Esophagus muscularis mucosa (tissue), 4 donors: ENCODE measurements at regions of chr3 and their contacts with region 1.

Region 1: DNA sequence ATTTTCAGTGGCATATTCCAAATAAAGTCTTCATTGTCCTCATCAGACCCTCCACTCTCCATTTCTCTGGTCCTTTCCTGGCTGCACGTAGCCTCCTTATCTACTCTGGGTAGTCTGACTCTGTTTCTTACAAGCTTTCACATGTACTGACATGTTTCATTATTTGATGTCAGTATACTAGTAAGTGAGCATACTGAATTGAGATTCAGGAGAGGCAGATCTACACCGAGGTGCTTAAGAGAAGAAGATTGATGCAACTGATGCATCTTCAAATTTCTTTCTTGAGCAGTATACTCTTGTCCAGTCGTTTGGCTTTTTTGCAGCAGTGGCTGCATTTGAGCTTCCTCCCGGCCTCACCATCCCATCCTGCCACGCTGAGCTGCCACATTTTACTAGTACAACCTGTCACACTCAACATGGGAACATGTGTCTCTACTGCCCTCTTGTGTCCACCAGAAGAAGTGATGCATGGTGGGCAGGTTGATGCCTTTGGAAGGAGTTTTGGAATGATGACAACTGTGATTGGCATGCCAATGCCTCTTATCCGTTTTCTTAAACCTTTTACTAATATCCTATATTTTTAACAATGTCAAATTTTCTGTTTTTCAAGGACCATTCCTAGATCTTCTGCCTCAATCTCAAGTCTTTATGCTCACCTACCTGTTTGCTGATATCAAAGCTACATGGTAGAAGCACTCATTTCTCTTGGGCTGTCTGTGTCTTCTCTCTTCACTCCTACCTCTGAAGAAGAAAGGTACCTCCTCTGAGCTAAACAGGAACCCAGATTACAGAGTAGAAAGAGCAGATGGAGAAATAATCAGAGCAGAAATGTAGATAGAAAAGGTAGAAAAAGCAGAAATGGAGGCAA is 38.7 kb downstream of the GUCA1C start:
- DNase-seq: no peak
- H3K4me3 ChIP-seq: no peak overlapping the region
- H3K27ac ChIP-seq: no peak overlapping the region
- H3K4me1 ChIP-seq: no peaks in the 10 kb centered on the region
- H3K27me3 ChIP-seq: peaks cover 0 to 3% (median 0%) of the 10 kb centered on the region in 4 donors
- CTCF ChIP-seq: peak; percentile 48 to 75 (median 61)
- EP300 ChIP-seq: no peak
- POLR2A ChIP-seq: no peak

Region 2: DNA sequence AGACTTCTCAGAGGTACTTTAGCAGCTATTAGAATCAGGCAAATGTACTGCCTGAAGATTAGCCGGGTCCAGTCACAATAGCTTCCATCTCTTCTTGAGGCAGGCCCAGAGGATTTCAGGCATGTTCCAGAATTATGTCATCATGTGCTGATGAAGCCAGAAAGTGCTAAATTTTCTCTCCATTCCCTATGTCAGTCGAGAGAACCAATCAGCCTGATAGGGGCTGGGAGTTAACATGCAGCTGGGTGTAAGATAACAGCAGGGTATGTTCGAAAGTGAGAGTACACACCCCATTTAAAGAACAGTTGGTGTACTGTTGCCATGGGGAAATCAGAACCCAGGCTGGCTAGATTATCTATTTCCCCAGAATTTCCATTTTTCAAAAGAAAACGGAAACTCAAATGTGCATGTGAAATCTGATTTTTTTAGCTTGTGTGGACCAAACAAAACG is 453.3 kb before region 1 on chr3:
- intact Hi-C with region 1: no loop called
- DNase-seq: no peak
- H3K4me3 ChIP-seq: no peak overlapping the region
- H3K27ac ChIP-seq: no peak overlapping the region
- H3K4me1 ChIP-seq: no peaks in the 10 kb centered on the region
- H3K27me3 ChIP-seq: no peaks in the 10 kb centered on the region
- CTCF ChIP-seq: no peak
- EP300 ChIP-seq: no peak
- POLR2A ChIP-seq: no peak

Region 3: GRCh38 chr3:108662130-108662738 is 252.8 kb before region 1 on chr3:
- intact Hi-C with region 1: loop called (anchors 2 kb)
- DNase-seq: no peak
- H3K4me3 ChIP-seq: no peak overlapping the region
- H3K27ac ChIP-seq: no peak overlapping the region
- H3K4me1 ChIP-seq: peaks cover 0 to 7% (median 2%) of the 10 kb centered on the region in 4 donors
- H3K27me3 ChIP-seq: no peaks in the 10 kb centered on the region
- CTCF ChIP-seq: peak; percentile 55 to 83 (median 79)
- EP300 ChIP-seq: no peak
- POLR2A ChIP-seq: no peak